CD4-positive, alpha-beta T cell (primary cell): ENCODE measurements at regions of chr20 and their contacts with region 1.

Region 1: GRCh38 chr20:34111702-34112599 is at the start of gene EIF2S2:
- DNase-seq: peak; percentile 91 to 100 (median 96)
- ATAC-seq: peak; percentile 87
- H3K4me3 ChIP-seq: peak within 1 kb of the TSS; percentile 93
- H3K4me3 Mint-ChIP-seq: peak within 1 kb of the TSS; percentile 96
- H3K27ac ChIP-seq: peak within 1 kb of the TSS; percentile 92
- H3K27ac Mint-ChIP-seq: peak within 1 kb of the TSS; percentile 95
- H3K4me1 ChIP-seq: peaks cover 37% of the 10 kb centered on the region
- H3K4me1 Mint-ChIP-seq: peaks cover 48% of the 10 kb centered on the region
- H3K27me3 ChIP-seq: no peaks in the 10 kb centered on the region
- H3K27me3 Mint-ChIP-seq: no peaks in the 10 kb centered on the region
- CTCF ChIP-seq: no peak
- total RNA-seq, gene EIF2S2: 21.8 to 23.2 TPM

Region 2: DNA sequence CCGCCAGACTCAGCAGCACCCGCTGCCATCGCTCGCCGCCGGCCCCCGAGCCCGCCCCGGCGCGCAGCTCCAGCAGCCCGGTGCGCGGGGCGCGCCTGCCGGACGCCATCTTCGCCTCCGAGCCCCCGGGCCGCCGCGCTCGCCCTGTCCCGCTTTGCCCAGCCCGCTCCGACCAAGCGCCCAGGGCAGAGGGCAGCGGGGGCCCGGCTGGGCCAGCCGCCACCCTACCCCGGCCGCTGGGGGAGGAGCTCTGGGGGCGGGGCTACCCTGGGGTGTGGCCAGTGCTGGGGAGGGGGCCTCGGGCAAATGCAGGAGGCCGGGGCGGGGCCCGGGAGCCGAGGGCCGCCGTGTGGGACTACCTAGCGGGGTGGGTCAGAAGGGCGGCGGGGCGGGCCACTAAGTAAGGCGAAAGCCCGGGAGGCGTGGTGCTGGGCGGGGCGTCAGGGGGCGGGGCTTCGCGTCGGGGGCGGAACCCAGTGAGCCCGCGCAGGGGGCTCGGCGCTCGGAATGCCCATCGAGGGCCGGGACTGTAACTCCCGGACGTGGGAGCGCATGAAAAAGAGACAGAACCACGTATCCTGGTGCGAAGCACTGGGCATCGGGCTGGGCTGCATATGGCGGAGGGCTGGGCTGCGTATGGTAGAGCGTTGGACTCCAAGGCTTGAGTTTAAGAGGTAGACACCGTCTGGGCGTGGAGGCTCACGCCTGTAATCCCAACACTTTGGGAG is 668.3 kb before region 1 on chr20 and contains the start of gene SNTA1:
- CTCF ChIA-PET with region 1: no interaction called
- POLR2A ChIA-PET with region 1: interaction called, 10 read pairs
- intact Hi-C with region 1: loop called in 1 of 2 experiments (anchors 5 kb)
- DNase-seq: peak; percentile 74 to 95 (median 86)
- ATAC-seq: peak; percentile 57
- H3K4me3 ChIP-seq: peak within 1 kb of the TSS; percentile 90
- H3K4me3 Mint-ChIP-seq: peak within 1 kb of the TSS; percentile 95
- H3K27ac ChIP-seq: peak within 1 kb of the TSS; percentile 72 to 80
- H3K27ac Mint-ChIP-seq: peak within 1 kb of the TSS; percentile 94
- H3K4me1 ChIP-seq: peaks cover 25% of the 10 kb centered on the region
- H3K4me1 Mint-ChIP-seq: peaks cover 22% of the 10 kb centered on the region
- H3K27me3 ChIP-seq: no peaks in the 10 kb centered on the region
- H3K27me3 Mint-ChIP-seq: no peaks in the 10 kb centered on the region
- CTCF ChIP-seq: no peak
- total RNA-seq, gene SNTA1: 5.0 to 5.2 TPM

Region 3: DNA sequence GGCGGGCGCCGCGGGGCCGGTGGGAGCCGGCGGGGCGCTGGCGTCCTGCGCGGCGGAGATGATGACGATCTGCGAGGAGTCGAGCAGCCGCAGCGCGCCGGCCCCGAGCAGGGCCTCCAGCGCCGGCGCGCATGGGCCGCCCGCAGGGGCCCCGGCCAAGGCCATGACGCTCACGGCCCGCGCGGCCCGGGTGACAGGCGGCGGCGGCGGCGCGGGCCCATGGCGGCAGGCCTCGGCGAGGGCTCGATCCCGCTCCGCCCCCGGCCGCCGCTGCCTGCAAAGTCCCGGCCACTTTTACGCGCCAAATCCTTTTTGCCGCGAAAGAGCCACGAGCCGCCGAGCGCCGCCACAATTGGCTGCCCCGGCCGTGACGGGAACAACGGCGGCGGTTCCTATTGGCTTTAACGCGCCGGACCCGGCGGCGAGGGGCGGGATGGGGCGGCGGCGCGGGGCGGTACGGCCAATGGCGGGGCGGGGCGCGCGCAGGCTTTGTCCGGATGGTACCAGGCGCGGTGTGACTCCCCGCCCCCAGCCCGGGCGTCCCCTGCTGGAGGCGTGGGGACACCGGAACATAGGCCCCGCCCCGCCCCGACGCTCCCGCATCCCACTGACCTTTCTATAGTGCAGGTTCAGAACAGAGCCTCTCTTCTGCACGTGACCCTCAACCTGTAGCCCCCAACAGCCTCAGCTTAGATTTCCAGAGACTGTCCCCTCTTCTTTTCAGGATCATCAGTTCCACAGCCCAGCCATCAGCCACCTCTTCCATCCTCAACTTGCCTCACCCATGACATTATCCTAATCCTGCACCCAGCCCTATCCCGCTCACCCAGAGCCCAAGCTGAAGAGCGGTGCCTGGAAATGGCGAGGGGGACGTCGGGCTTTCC is 425.6 kb before region 1 on chr20 and contains the start of gene E2F1:
- CTCF ChIA-PET with region 1: no interaction called
- POLR2A ChIA-PET with region 1: no interaction called
- intact Hi-C with region 1: loop called in 1 of 2 experiments (anchors 5 kb)
- DNase-seq: peak; percentile 81 to 97 (median 94)
- ATAC-seq: peak; percentile 94
- H3K4me3 ChIP-seq: peak within 1 kb of the TSS; percentile 47
- H3K4me3 Mint-ChIP-seq: peak within 1 kb of the TSS; percentile 89
- H3K27ac ChIP-seq: no peak within 1 kb of the TSS
- H3K27ac Mint-ChIP-seq: peak within 1 kb of the TSS; percentile 39
- H3K4me1 ChIP-seq: peaks cover 50% of the 10 kb centered on the region
- H3K4me1 Mint-ChIP-seq: peaks cover 50% of the 10 kb centered on the region
- H3K27me3 ChIP-seq: no peaks in the 10 kb centered on the region
- H3K27me3 Mint-ChIP-seq: no peaks in the 10 kb centered on the region
- CTCF ChIP-seq: peak; percentile 23
- total RNA-seq, gene E2F1: 1.2 to 1.6 TPM

Region 4: GRCh38 chr20:33731693-33732165 is 380.2 kb before region 1 on chr20 and contains the start of gene ZNF341:
- CTCF ChIA-PET with region 1: no interaction called
- POLR2A ChIA-PET with region 1: interaction called, 9 read pairs
- intact Hi-C with region 1: loop called in 1 of 2 experiments (anchors 5 kb)
- DNase-seq: peak in 13 of 14 experiments; percentile 80 to 96 (median 87)
- ATAC-seq: peak; percentile 83
- H3K4me3 ChIP-seq: peak within 1 kb of the TSS; percentile 85
- H3K4me3 Mint-ChIP-seq: peak within 1 kb of the TSS; percentile 93
- H3K27ac ChIP-seq: peak within 1 kb of the TSS; percentile 57 to 70
- H3K27ac Mint-ChIP-seq: peak within 1 kb of the TSS; percentile 96
- H3K4me1 ChIP-seq: peaks cover 28% of the 10 kb centered on the region
- H3K4me1 Mint-ChIP-seq: peaks cover 22% of the 10 kb centered on the region
- H3K27me3 ChIP-seq: no peaks in the 10 kb centered on the region
- H3K27me3 Mint-ChIP-seq: no peaks in the 10 kb centered on the region
- CTCF ChIP-seq: peak; percentile 76
- total RNA-seq, gene ZNF341: 2.1 to 2.7 TPM

Region 5: GRCh38 chr20:33862709-33863403 is 249.1 kb before region 1 on chr20:
- CTCF ChIA-PET with region 1: no interaction called
- POLR2A ChIA-PET with region 1: interaction called, 15 read pairs
- intact Hi-C with region 1: no loop called
- DNase-seq: peak in 13 of 14 experiments; percentile 18 to 65 (median 37)
- ATAC-seq: peak; percentile 37
- H3K4me3 ChIP-seq: no peak overlapping the region
- H3K4me3 Mint-ChIP-seq: no peak overlapping the region
- H3K27ac ChIP-seq: no peak overlapping the region
- H3K27ac Mint-ChIP-seq: no peak overlapping the region
- H3K4me1 ChIP-seq: peaks cover 32% of the 10 kb centered on the region
- H3K4me1 Mint-ChIP-seq: peaks cover 31% of the 10 kb centered on the region
- H3K27me3 ChIP-seq: no peaks in the 10 kb centered on the region
- H3K27me3 Mint-ChIP-seq: no peaks in the 10 kb centered on the region
- CTCF ChIP-seq: peak; percentile 62

Region 6: DNA sequence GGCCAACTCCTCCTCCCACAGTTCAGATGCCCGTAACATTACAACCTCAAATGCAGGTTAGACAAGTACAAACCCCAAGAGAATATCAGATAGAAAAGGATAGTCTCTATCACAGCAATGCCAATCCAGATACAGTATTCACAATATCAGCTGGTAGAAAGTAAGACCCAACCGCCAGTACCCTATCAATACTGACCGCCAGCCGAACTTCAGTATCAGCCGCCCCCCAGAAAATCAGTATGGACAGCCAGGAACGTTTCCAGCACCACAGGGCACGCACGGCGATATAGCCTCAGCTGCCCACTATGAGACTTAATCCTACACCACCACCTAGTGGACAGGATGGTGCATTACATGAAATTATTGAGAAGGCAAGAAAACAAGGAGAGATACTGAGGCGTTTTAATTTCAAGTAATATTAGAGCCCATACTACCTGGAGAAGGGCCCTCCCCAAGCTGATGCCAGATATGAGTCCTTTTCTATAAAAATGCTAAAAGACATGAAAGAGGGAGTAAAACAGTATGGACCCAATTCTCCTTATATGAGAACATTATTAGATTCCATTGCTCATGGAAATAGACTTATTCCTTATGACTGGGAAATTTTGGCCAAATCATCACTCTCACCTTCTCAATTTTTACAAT is 17.7 kb after region 1 on chr20:
- CTCF ChIA-PET with region 1: interaction called, 11 read pairs
- POLR2A ChIA-PET with region 1: interaction called, 10 read pairs
- intact Hi-C with region 1: loop called in 1 of 2 experiments (anchors 1 kb)
- DNase-seq: peak; percentile 8 to 86 (median 39)
- ATAC-seq: peak; percentile 96
- H3K4me3 ChIP-seq: no peak overlapping the region
- H3K4me3 Mint-ChIP-seq: no peak overlapping the region
- H3K27ac ChIP-seq: no peak overlapping the region
- H3K27ac Mint-ChIP-seq: no peak overlapping the region
- H3K4me1 ChIP-seq: peaks cover 4% of the 10 kb centered on the region
- H3K4me1 Mint-ChIP-seq: no peaks in the 10 kb centered on the region
- H3K27me3 ChIP-seq: no peaks in the 10 kb centered on the region
- H3K27me3 Mint-ChIP-seq: peaks cover 12% of the 10 kb centered on the region
- CTCF ChIP-seq: peak; percentile 93

Region 7: DNA sequence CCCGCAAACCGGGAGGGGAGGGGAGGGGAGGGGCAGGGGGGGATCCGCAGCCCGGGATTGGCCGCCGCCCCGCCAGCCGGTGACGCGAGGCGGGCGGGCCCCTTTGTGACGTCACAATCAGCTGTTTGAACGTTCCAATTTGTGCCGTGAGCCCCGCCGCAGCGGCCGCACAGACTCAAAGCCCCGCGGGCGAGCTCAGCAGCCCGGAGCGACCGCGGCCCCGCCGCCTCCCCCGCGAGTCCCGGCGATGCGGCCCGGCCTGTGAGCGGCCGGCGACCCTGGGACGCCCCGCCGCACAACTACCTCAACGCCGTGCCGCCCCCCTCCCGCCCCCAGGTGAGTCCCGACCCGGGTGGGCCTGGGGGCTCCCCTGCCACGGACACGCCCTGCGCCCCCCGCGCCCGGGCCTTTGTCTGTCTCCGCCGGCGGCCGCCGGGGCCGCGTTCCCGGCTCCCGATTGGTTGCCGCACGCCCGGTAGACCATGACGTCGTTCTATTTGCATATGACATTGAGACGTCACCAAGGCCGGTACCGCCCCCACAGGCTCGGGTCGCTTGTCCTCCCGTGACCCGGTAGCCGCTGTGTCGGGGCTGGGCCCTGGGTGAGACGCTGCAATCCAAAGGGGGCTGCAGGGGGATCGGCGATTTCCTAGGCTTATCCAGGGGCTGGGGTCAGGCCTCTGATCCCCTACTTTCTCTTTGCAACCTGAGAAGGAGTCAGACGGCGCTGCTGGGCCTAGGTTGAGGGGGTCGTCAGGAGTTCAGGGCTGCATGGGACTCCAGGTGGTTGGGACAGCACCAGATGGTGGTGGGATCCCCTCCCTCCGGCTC is 592.4 kb after region 1 on chr20 and contains the start of gene TP53INP2:
- CTCF ChIA-PET with region 1: no interaction called
- POLR2A ChIA-PET with region 1: no interaction called
- intact Hi-C with region 1: loop called in 1 of 2 experiments (anchors 10 kb)
- DNase-seq: peak; percentile 67 to 96 (median 84)
- ATAC-seq: peak; percentile 58
- H3K4me3 ChIP-seq: peak within 1 kb of the TSS; percentile 94
- H3K4me3 Mint-ChIP-seq: peak within 1 kb of the TSS; percentile 97
- H3K27ac ChIP-seq: peak within 1 kb of the TSS; percentile 59 to 69
- H3K27ac Mint-ChIP-seq: peak within 1 kb of the TSS; percentile 94
- H3K4me1 ChIP-seq: peaks cover 30% of the 10 kb centered on the region
- H3K4me1 Mint-ChIP-seq: peaks cover 36% of the 10 kb centered on the region
- H3K27me3 ChIP-seq: no peaks in the 10 kb centered on the region
- H3K27me3 Mint-ChIP-seq: peaks cover 13% of the 10 kb centered on the region
- CTCF ChIP-seq: no peak
- total RNA-seq, gene TP53INP2: 65.8 to 72.7 TPM